CD4-positive, alpha-beta T cell (primary cell): ENCODE measurements at regions of chr17 and their contacts with region 1.

Region 1: DNA sequence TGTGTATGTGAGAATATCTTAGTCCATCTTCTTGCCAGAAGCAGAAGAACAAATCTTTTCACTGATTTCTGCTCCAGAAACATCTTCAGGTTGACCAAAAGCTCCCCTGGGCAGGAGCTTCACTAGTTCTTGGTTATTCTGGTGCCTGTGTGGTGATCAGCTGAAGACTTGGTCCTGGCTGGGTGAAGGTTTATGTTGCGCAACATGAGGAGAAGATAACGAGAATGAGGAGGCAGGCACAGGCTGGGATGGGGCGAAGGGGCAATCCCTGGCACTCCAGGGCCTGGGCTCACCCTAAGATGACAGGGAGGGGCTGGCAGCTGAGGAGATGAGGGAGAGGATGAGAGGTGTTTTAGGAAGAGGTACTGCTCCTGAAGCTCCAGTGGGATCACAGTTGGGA is 232.0 kb downstream of the NTN1 start:
- DNase-seq: no peak
- ATAC-seq: no peak
- H3K4me3 ChIP-seq: no peak overlapping the region
- H3K4me3 Mint-ChIP-seq: no peak overlapping the region
- H3K27ac ChIP-seq: no peak overlapping the region
- H3K27ac Mint-ChIP-seq: peak overlapping the region; percentile 83
- H3K4me1 ChIP-seq: peaks cover 18% of the 10 kb centered on the region
- H3K4me1 Mint-ChIP-seq: peaks cover 45% of the 10 kb centered on the region
- H3K27me3 ChIP-seq: no peaks in the 10 kb centered on the region
- H3K27me3 Mint-ChIP-seq: no peaks in the 10 kb centered on the region
- CTCF ChIP-seq: no peak

Region 2: GRCh38 chr17:9195961-9196716 is 57.2 kb before region 1 on chr17:
- CTCF ChIA-PET with region 1: no interaction called
- POLR2A ChIA-PET with region 1: no interaction called
- intact Hi-C with region 1: no loop called
- DNase-seq: no peak
- ATAC-seq: no peak
- H3K4me3 ChIP-seq: no peak overlapping the region
- H3K4me3 Mint-ChIP-seq: no peak overlapping the region
- H3K27ac ChIP-seq: no peak overlapping the region
- H3K27ac Mint-ChIP-seq: no peak overlapping the region
- H3K4me1 ChIP-seq: no peaks in the 10 kb centered on the region
- H3K4me1 Mint-ChIP-seq: no peaks in the 10 kb centered on the region
- H3K27me3 ChIP-seq: no peaks in the 10 kb centered on the region
- H3K27me3 Mint-ChIP-seq: no peaks in the 10 kb centered on the region
- CTCF ChIP-seq: no peak

Region 3: GRCh38 chr17:9239793-9240658 is 13.3 kb before region 1 on chr17:
- CTCF ChIA-PET with region 1: no interaction called
- POLR2A ChIA-PET with region 1: interaction called, 11 read pairs
- intact Hi-C with region 1: no loop called
- DNase-seq: peak; percentile 47 to 87 (median 64)
- ATAC-seq: peak; percentile 91
- H3K4me3 ChIP-seq: peak overlapping the region; percentile 67
- H3K4me3 Mint-ChIP-seq: peak overlapping the region; percentile 86
- H3K27ac ChIP-seq: peak overlapping the region in 1 of 2 donors; percentile 23
- H3K27ac Mint-ChIP-seq: peak overlapping the region; percentile 71
- H3K4me1 ChIP-seq: peaks cover 22% of the 10 kb centered on the region
- H3K4me1 Mint-ChIP-seq: peaks cover 15% of the 10 kb centered on the region
- H3K27me3 ChIP-seq: no peaks in the 10 kb centered on the region
- H3K27me3 Mint-ChIP-seq: no peaks in the 10 kb centered on the region
- CTCF ChIP-seq: no peak

Region 4: GRCh38 chr17:9271989-9272388 is 18.7 kb after region 1 on chr17:
- CTCF ChIA-PET with region 1: no interaction called
- POLR2A ChIA-PET with region 1: no interaction called
- intact Hi-C with region 1: no loop called
- DNase-seq: no peak
- ATAC-seq: no peak
- H3K4me3 ChIP-seq: no peak overlapping the region
- H3K4me3 Mint-ChIP-seq: no peak overlapping the region
- H3K27ac ChIP-seq: no peak overlapping the region
- H3K27ac Mint-ChIP-seq: no peak overlapping the region
- H3K4me1 ChIP-seq: no peaks in the 10 kb centered on the region
- H3K4me1 Mint-ChIP-seq: peaks cover 29% of the 10 kb centered on the region
- H3K27me3 ChIP-seq: no peaks in the 10 kb centered on the region
- H3K27me3 Mint-ChIP-seq: no peaks in the 10 kb centered on the region
- CTCF ChIP-seq: no peak